ENCODE measurements at regions of chr4 and their contacts with region 1.

Region 1: DNA sequence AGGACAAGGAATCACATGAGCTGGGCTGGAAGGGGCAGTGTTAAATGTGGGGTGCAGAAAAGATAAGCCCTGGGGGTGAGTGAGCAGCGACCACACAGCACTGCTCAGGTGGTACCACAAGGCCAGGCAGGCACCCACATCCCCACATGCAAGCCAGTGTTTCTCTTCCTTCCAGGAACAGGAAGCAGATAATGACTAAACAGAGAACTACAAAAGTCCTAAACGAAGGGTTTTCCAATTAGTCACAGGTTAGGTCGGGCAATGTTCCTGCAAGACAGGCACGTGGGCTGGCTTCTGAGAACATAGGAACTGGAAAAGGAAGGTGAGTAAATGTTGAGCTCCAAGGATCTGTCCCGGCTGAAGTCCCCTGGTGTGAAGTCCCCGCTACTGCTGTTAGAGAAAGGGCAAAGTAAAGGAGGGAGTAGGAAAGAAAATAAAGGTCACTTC is 19.5 kb downstream of the RELL1 start:
- DNase-seq: peak; percentile 96
- ATAC-seq: peak; percentile 93
- H3K4me3 ChIP-seq: peak overlapping the region in 1 of 2 experiments; percentile 16; a peak in 2 of 4 replicates
- H3K27ac ChIP-seq: peak overlapping the region; percentile 74
- H3K4me1 ChIP-seq: peaks cover 44 to 74% of the 10 kb centered on the region in 2 experiments
- H3K27me3 ChIP-seq: no peaks in the 10 kb centered on the region
- CTCF ChIP-seq: peak in 2 of 3 experiments; percentile 16 to 39; a peak in 3 of 6 replicates
- POLR2A ChIP-seq: no peak
- RAD21 ChIP-seq: peak; percentile 52

Region 2: DNA sequence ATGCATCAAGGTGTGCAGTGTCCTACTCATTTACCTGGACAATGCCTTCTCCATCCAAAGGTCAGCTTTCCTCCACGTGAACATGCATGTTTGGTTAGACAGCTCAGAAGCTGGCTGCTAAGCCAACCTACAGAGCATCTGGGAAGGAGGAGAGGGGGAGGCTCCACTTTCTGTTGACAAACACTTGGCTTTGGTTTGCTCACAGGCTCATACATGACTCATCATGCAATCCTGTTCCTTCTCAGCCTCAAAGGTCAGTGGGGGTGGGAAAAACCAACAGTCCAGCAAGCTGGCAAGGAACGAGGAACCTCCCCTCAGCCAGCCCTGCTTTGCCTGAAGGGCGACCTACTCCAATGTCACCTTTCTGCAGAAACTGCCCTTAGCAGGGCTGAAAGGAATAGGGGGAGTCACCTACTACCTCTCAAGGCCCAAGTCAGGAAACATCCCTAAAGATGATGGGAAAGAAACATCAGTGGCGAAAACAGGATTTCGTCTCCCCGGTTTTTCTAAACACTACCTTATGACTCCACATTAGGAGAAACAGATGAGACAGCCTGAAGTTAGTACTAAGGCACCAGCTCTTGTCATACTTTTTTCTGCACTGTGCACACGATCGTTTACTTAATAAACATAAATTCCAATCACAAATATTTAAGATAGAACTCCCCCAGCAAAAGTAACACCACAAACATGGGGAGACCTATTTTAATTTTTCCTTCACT is 18.4 kb before region 1 on chr4:
- CTCF ChIA-PET with region 1: no interaction called
- POLR2A ChIA-PET with region 1: no interaction called
- RAD21 ChIA-PET with region 1: no interaction called
- intact Hi-C with region 1: loop called (anchors 1 kb)
- DNase-seq: peak; percentile 77
- ATAC-seq: peak; percentile 96
- H3K4me3 ChIP-seq: peak overlapping the region in 1 of 2 experiments; percentile 32; a peak in 2 of 4 replicates
- H3K27ac ChIP-seq: peak overlapping the region; percentile 16; the same call in 1 of the 2 replicates
- H3K4me1 ChIP-seq: peaks cover 17 to 39% of the 10 kb centered on the region in 2 experiments
- H3K27me3 ChIP-seq: no peaks in the 10 kb centered on the region
- CTCF ChIP-seq: no peak
- POLR2A ChIP-seq: no peak
- RAD21 ChIP-seq: peak; percentile 31

Measured in HCT116 (cell line).